Esophagus muscularis mucosa (tissue), 4 donors: ENCODE measurements at regions of chr20 and their contacts with region 1.

Region 1: GRCh38 chr20:60897986-60898385 is 354.1 kb upstream of the CDH4 start:
- DNase-seq: no peak
- H3K4me3 ChIP-seq: no peak overlapping the region
- H3K27ac ChIP-seq: no peak overlapping the region
- H3K4me1 ChIP-seq: no peaks in the 10 kb centered on the region
- H3K27me3 ChIP-seq: peaks cover 0 to 1% (median 0%) of the 10 kb centered on the region in 4 donors
- CTCF ChIP-seq: no peak
- EP300 ChIP-seq: no peak
- POLR2A ChIP-seq: no peak

Region 2: DNA sequence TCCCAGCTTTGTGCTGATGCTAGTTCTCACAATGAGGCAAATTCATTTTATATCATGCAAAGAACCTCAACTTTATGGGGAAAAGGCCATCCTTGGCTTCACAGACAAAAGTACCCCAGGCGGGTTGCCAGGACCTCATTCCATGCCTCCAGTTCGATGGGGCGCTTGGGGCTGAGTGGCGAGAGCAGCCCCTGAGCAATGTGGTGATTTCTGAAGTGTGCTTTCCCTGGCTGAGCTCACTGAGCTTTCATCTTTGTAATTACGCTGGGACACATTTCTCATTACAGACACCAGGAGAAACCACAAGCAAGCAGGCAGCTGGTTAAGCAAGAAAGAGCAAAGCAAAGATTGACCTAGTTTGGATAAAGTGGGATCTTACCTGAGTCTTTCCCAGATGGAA is 52.6 kb after region 1 on chr20:
- intact Hi-C with region 1: loop called (anchors 10 kb)
- DNase-seq: no peak
- H3K4me3 ChIP-seq: no peak overlapping the region
- H3K27ac ChIP-seq: no peak overlapping the region
- H3K4me1 ChIP-seq: peaks cover 0 to 3% (median 0%) of the 10 kb centered on the region in 4 donors
- H3K27me3 ChIP-seq: no peaks in the 10 kb centered on the region
- CTCF ChIP-seq: no peak
- EP300 ChIP-seq: no peak
- POLR2A ChIP-seq: no peak